SK-N-SH (cell line): ENCODE measurements at regions of chr1 and their contacts with region 1.

Region 1: DNA sequence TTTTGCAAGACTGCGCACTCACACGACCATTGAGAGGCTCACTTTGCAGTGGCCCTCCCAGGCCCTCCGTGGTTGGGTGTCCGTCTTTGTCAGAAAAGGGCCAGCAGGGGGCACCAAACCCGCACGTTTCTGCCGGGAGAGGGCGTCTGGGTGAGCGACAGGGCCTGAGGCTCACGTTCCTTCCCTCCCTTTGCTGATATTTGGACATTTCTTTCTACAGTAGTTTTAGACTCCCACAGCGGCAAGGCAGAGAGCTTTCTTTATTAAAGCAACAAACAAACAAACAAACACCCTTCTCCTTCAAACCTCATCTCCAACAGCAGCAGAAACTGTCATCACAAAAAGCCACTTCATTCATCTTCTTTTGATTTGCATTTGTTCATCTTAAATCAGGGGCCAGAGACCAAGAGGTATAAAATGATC is 79.2 kb upstream of the WDR26 start:
- DNase-seq: peak; percentile 89
- H3K4me3 ChIP-seq: peak overlapping the region in 1 of 2 experiments; percentile 27; a peak in 1 of 4 replicates
- H3K27ac ChIP-seq: no peak overlapping the region
- H3K4me1 ChIP-seq: peaks cover 0 to 3% of the 10 kb centered on the region in 2 experiments; a peak in 2 of 4 replicates
- H3K27me3 ChIP-seq: no peaks in the 10 kb centered on the region
- CTCF ChIP-seq: peak; percentile 92
- EP300 ChIP-seq: no peak
- RAD21 ChIP-seq: peak; percentile 97

Region 2: DNA sequence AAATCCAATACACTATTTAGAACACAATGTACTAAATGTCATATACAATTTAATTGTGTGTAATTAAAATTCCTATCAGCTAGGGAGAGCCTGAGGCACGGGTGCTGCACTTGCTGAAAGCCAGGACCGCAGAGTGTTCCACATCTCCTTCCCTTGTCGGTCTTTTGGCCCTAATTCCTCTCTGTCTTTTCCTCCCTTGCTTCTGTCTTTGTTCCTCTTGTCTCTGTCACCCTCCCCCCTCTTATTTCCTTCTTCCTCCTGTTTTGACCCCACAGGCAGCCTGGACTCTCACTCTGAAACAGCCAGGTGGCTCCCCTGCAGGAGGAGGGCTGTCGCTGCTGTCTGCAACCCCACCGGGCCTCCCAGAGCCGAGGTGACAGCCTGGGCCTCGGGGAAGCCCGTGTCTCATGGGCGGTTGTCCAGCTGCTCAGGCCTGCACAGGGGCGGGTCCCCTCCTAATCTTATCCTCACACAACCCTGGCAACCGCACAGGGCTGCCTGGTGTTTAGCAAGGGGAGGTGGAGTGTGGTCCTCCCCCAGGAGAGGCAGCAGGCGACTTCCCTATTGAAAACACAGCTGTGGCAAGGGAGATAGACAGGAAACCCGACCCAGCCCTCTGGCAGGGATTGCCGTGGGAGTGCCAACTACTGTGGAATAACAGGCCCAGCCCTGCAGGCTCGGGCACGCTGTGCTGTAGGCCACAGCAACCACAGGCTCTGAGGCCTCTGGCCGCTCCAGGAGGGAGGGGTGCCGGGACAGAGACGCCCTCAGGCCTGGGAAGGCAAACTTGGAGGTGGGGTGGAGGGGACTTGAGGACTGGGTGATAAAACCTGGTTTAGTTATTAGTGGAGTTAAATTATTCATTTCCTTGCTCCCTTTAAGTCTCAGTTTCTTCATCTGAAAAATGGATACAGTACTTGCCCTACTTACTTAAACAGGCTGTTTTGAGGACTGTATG is 10.4 kb before region 1 on chr1:
- CTCF ChIA-PET with region 1: interaction called, 33 read pairs
- POLR2A ChIA-PET with region 1: interaction called, 3 read pairs
- DNase-seq: peak; percentile 89
- H3K4me3 ChIP-seq: no peak overlapping the region
- H3K27ac ChIP-seq: peak overlapping the region; percentile 59 to 85
- H3K4me1 ChIP-seq: peaks cover 38 to 44% of the 10 kb centered on the region in 2 experiments
- H3K27me3 ChIP-seq: no peaks in the 10 kb centered on the region
- CTCF ChIP-seq: no peak; the same call in 1 of the 2 replicates
- EP300 ChIP-seq: peak in 1 of 2 experiments; percentile 13; a peak in 1 of 4 replicates
- RAD21 ChIP-seq: no peak

Region 3: DNA sequence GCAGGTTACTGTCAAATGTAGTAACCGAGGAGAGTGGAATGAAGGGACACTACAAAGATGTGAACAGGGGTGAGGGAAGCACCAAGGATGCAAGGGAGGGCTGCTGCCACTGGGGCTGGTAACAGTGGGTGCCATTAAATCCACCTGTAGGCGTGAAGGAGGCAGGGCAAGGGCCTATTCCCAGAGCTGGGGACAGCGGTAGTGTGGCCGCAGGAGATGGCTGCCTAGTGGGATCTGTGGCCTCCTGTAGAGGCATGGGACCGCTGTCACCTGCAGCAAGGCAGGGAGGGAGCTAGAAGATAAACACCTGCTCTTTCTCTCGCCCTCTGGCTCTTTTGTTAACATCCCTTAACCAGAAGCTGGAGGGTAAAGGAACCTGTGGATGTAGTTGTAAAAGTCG is 21.8 kb after region 1 on chr1:
- CTCF ChIA-PET with region 1: interaction called, 30 read pairs
- POLR2A ChIA-PET with region 1: no interaction called
- DNase-seq: no peak
- H3K4me3 ChIP-seq: no peak overlapping the region
- H3K27ac ChIP-seq: no peak overlapping the region
- H3K4me1 ChIP-seq: peaks cover 3 to 6% of the 10 kb centered on the region in 2 experiments; a peak in 2 of 4 replicates
- H3K27me3 ChIP-seq: no peaks in the 10 kb centered on the region
- CTCF ChIP-seq: no peak
- EP300 ChIP-seq: no peak
- RAD21 ChIP-seq: no peak

Region 4: DNA sequence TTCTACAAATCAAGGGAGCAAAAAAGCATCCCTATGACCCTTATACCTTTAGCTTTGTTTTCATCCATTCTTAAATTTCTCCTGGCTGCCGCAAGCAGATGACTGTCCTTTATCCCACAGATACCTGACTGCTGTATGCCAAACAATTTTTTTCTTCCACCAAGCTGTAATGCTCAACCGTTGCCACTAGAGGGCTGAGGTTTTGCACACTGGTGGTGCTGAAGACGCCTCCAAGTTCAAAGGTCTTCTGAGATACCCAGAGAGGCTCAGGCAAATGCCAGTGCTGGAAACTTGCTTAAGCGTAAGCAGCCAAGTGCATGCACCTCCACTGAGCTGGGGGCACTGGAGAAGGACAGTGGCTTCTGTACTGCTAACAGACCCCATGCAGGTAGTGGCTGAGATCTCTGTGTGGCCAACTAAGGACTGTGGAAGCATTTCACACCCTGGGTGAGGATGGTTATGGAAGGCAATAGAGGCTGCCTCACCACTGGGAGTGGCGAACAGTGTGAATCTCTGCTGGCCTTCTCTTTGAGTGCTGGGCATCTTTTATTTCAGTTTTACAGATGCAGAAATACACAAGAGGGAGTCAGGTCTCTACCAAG is 130.9 kb after region 1 on chr1:
- CTCF ChIA-PET with region 1: interaction called, 20 read pairs
- POLR2A ChIA-PET with region 1: no interaction called
- DNase-seq: peak; percentile 59
- H3K4me3 ChIP-seq: no peak overlapping the region; a peak in 1 of 4 replicates
- H3K27ac ChIP-seq: no peak overlapping the region
- H3K4me1 ChIP-seq: peaks cover 0 to 6% of the 10 kb centered on the region in 2 experiments; a peak in 1 of 4 replicates
- H3K27me3 ChIP-seq: no peaks in the 10 kb centered on the region
- CTCF ChIP-seq: peak; percentile 85
- EP300 ChIP-seq: no peak
- RAD21 ChIP-seq: peak; percentile 78

Region 5: DNA sequence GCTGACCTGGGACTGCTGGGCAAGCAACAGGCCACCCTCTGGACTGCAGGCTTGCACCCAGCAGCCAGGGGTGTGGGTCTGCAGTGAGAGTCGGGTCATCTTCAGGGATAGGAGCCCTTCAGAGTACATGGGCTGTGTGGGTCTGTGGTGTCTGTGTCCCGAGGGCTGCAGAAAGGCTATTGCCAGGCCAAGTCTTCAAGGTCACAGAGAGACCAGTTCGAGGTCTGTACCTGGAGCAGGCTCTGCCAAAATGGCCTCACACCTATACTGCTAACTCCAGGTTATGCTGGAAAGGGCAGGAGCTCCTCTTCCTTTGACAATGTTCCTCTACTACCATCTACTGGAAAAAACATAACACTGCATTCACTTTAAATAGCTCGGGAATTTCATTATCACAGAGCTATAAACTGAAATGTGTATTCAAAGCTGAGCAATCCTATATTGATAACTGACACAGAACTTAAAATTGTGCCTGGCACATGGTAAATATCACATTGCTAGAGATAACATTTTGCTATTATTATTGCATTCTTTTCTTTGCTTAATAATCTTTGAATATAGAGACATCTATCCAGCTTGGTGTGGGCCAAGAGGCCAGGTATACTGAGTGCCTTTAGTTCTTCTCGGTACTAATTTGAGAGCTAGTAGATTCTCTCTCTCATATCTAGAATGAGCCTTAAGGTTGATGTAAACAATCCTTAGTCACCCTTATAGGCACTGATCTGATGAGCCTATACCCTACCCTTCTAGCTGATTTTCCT is 408.8 kb after region 1 on chr1:
- CTCF ChIA-PET with region 1: interaction called, 124 read pairs
- POLR2A ChIA-PET with region 1: no interaction called
- DNase-seq: peak; percentile 61
- H3K4me3 ChIP-seq: peak overlapping the region in 1 of 2 experiments; percentile 35; a peak in 1 of 4 replicates
- H3K27ac ChIP-seq: no peak overlapping the region
- H3K4me1 ChIP-seq: no peaks in the 10 kb centered on the region; a peak in 1 of 4 replicates
- H3K27me3 ChIP-seq: no peaks in the 10 kb centered on the region
- CTCF ChIP-seq: peak; percentile 86
- EP300 ChIP-seq: no peak
- RAD21 ChIP-seq: peak; percentile 91